AG04449 (cell line): ENCODE measurements at regions of chr2 and their contacts with region 1.

Region 1: GRCh38 chr2:7044261-7045250 is 127.3 kb downstream of the RNF144A start:
- DNase-seq: no peak
- H3K4me3 ChIP-seq: no peak overlapping the region
- CTCF ChIP-seq: peak; percentile 90

Region 2: GRCh38 chr2:6896930-6897759 is 147.4 kb before region 1 on chr2:
- CTCF ChIA-PET with region 1: interaction called, 60 read pairs
- POLR2A ChIA-PET with region 1: no interaction called
- DNase-seq: no peak
- H3K4me3 ChIP-seq: no peak overlapping the region
- CTCF ChIP-seq: peak; percentile 29

Region 3: GRCh38 chr2:6927186-6927585 is 117.4 kb before region 1 on chr2:
- CTCF ChIA-PET with region 1: no interaction called
- POLR2A ChIA-PET with region 1: no interaction called
- DNase-seq: no peak
- H3K4me3 ChIP-seq: no peak overlapping the region
- CTCF ChIP-seq: no peak

Region 4: DNA sequence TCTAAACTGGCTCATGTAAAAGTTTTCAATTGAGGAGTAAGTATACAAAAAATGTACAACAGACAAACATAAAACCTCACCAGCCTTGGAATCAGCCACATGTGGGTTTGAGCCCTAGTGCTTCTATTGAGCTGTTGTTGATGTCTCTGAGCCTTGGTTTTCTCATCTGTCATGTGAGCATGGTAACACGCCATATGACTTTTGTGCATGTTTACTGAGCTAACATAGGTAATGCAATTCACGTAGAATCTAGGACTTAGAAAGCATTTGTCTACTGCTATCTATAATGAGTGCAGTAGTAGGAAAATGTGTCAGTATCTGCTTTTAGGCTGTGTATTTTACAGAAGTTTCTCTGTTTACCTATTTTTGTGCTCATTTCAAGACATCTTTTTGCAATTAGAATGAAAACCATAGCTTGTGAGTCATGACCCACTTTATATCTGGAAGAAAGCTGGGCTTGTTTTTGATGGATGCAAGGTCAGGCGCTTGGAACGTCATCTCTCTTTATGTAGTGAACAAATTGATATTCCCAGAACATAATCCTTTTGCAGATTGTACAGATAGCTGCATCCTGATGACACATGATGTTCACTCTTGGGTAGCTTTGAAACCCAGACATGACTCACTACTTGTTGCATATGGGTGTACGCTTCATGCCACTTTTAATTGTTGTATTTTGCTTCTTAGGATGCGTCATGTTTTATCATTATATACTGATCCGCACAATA is 33.0 kb before region 1 on chr2:
- CTCF ChIA-PET with region 1: interaction called, 15 read pairs
- POLR2A ChIA-PET with region 1: no interaction called
- DNase-seq: peak; percentile 75
- H3K4me3 ChIP-seq: no peak overlapping the region
- CTCF ChIP-seq: no peak

Region 5: GRCh38 chr2:7031547-7032245 is 12.9 kb before region 1 on chr2:
- CTCF ChIA-PET with region 1: interaction called, 34 read pairs
- POLR2A ChIA-PET with region 1: no interaction called
- DNase-seq: no peak
- H3K4me3 ChIP-seq: no peak overlapping the region
- CTCF ChIP-seq: no peak

Region 6: DNA sequence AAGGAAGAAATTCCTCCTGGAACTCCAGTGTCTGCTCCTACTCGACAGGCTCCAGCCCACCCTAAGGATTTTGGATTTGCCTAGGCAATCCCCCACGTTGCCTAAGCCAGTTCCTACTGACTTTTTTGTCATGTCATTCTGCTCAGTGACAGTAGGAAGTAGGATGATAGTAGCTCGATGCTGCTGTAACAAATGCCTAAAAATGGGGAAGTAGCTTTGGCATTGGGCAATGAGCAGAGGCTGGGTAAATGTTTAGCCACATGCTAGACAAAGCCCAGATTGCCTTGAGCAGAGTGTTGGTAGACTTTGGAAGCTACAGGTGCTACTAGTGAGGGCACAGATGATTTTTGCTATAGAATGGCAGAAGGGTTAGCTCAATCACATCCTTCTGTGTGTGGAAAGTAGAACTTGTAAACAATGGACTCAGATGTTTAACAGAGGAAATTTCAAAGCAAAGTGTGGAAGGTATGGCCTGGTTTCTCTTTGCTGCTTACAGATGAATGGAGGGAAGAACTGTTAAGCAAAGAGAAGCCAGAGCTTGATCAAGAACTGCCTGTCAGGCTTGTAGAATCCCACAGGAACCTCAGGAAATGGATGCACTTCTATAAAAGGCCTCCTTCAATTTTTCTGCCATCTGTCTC is 27.5 kb after region 1 on chr2:
- CTCF ChIA-PET with region 1: interaction called, 10 read pairs
- POLR2A ChIA-PET with region 1: no interaction called
- DNase-seq: no peak
- H3K4me3 ChIP-seq: no peak overlapping the region
- CTCF ChIP-seq: no peak